Breast epithelium (tissue), 4 donors: ENCODE measurements at regions of chr17 and their contacts with region 1.

Region 1: GRCh38 chr17:16453493-16453851 is 38.1 kb downstream of the TRPV2 start:
- DNase-seq: no peak
- H3K4me3 ChIP-seq: no peak overlapping the region
- H3K27ac ChIP-seq: no peak overlapping the region
- H3K4me1 ChIP-seq: no peaks in the 10 kb centered on the region
- H3K27me3 ChIP-seq: no peaks in the 10 kb centered on the region
- CTCF ChIP-seq: peak in 1 of 3 donors; percentile 1
- POLR2A ChIP-seq: no peak

Region 2: DNA sequence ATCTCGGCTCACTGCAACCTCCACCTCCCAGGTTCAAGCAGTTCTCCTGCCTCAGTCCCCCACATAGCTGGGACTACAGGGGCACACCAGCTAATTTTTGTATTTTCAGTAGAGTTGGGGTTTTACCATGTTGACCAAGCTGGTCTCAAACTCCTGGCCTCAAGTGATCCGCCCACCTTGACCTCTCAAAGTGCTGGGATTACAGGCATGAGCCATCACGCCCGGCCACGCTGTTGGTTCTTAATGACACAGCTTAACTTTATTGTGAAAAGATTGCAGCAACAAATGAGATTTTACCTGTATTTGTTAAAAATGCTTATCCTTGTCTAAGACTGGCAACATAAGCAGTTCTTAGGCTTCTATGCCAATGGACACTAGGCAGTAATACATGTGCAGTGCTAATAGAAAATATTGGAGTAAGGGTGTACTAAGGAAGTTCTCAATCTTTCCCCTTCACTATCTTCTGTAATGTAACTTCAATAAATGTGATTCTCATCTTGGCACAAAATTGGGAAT is 69.6 kb before region 1 on chr17:
- intact Hi-C with region 1: loop called (anchors 2 kb)
- DNase-seq: no peak
- H3K4me3 ChIP-seq: peak overlapping the region in 1 of 3 donors; percentile 69
- H3K27ac ChIP-seq: peak overlapping the region in 1 of 2 donors; percentile 29
- H3K4me1 ChIP-seq: peaks cover 0 to 18% of the 10 kb centered on the region in 2 donors
- H3K27me3 ChIP-seq: no peaks in the 10 kb centered on the region
- CTCF ChIP-seq: no peak
- POLR2A ChIP-seq: no peak